ENCODE measurements at regions of chr2 and their contacts with region 1.

Region 1: GRCh38 chr2:43774617-43775016 is 778 bp downstream of the DYNC2LI1 start:
- DNase-seq: peak in 1 of 3 donors; percentile 7
- ATAC-seq: peak; percentile 48
- H3K4me3 ChIP-seq: no peak overlapping the region
- H3K4me1 ChIP-seq: peaks cover 5% of the 10 kb centered on the region
- CTCF ChIP-seq: no peak

Region 2: DNA sequence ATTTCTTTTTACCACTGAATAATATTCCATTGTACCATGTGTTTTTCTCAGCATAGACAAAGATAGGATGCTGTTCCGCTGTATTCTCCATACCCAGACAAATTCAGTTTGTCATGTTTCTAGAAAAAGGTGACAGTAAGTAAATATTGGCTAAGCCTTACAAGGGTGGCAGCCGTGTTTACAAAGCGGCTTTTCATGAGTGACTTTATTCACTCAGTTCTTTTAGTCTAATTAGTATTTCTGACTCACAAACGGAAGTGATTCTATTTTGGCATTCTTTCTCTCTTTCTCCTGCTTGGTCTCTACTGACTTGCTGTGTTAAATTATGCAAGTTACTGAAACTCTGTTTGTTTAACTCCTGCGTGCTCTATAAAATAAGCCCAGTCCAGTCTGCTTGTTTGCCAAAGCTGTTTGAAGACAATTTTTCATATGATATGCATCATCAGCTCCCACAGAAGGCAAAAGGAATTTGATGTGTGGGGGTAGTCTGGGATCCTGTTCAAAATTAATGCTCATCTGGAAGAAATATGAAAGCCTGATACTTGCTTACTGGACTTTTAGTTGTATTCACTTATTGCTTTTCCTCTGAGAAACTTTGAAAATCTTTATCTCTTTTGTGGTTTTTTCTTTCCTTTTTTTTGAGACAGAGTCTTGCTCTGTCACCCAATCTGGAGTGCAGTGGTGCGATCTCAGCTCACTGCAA is 139.9 kb before region 1 on chr2:
- intact Hi-C with region 1: loop called in 1 of 2 experiments (anchors 5 kb)
- DNase-seq: no peak
- ATAC-seq: peak; percentile 38
- H3K4me3 ChIP-seq: no peak overlapping the region
- H3K4me1 ChIP-seq: peaks cover 20% of the 10 kb centered on the region
- CTCF ChIP-seq: no peak